OCI-LY7 (cell line): ENCODE measurements at regions of chr16 and their contacts with region 1.

Region 1: DNA sequence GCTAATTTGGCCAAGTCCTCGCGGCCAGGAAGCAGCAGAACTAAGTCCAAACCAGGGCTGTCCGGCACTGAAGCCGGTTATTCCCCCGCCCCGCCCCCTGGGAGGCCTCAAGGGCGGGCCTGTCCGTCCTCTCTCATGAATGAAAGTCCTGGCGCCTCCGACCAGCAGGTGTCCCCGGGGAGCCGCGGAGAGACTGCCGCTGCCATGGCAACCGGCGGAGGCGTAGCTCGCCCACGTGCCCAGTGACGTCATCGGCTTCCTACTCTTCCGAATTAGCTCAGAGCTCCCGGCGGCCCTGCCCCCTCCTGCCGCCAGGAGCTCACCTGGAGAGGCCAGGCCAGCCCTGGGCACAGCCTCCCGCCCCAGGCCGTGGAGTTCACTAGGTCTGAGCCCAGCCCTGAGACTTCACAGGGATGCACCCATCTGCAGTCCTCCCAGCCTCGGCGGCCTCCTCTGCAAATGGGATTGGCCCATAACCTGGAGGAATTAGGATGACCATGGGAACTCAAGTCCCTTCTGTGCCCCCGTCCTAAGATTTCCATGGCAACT is 1.3 kb downstream of the SPATA2L start:
- DNase-seq: peak; percentile 99
- H3K4me3 ChIP-seq: peak overlapping the region; percentile 74
- H3K27ac ChIP-seq: peak overlapping the region; percentile 55
- H3K4me1 ChIP-seq: peaks cover 31% of the 10 kb centered on the region
- CTCF ChIP-seq: peak; percentile 72

Region 2: DNA sequence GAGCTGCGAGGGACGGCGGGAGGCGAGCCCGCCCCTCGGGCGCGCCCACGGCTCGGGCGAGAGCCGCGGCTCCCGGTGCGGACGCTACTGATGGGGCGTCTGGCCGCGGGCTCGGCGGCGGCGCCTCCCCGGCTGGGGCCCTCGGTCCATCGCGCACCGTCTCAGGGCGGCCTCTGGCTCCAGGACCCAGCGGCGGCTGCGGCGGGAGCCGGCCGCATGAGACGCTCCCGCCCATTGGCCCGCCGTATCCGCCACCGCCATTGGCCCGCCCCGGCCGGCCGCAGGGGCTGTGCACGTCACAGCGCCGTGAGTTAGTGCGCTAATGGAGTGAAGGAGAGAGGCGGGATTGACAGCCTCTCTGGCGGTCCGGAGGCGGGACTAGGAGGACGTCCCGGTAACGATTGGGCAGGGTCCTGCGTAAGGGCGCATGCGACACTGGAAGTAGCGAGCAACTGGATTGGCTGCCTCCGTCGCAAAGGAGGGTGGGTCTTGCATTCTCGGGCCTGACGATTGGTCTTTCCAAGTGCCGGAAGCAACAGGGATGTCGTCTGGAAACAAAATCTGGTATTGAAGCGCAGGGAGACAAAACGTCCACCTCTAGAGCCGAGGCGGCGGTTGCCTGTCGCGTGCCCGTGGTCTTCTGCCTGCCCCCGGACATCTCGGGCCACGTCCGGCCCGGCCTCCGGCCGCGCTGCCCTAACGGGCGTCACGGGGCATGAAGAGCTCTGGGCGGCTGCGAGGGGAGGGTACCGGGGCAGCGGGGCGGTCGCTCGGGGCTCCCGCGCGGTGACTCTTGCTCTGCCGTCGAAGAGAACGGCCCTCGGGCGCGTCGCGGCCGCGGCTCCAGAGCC is 209.6 kb before region 1 on chr16 and contains the start of gene ANKRD11:
- CTCF ChIA-PET with region 1: no interaction called
- POLR2A ChIA-PET with region 1: no interaction called
- intact Hi-C with region 1: no loop called
- DNase-seq: peak; percentile 100
- H3K4me3 ChIP-seq: peak within 1 kb of the TSS; percentile 83
- H3K27ac ChIP-seq: peak within 1 kb of the TSS; percentile 92
- H3K4me1 ChIP-seq: peaks cover 42% of the 10 kb centered on the region
- CTCF ChIP-seq: no peak
- total RNA-seq, gene ANKRD11: 87.0 and 89.1 TPM in 2 replicates

Region 3: DNA sequence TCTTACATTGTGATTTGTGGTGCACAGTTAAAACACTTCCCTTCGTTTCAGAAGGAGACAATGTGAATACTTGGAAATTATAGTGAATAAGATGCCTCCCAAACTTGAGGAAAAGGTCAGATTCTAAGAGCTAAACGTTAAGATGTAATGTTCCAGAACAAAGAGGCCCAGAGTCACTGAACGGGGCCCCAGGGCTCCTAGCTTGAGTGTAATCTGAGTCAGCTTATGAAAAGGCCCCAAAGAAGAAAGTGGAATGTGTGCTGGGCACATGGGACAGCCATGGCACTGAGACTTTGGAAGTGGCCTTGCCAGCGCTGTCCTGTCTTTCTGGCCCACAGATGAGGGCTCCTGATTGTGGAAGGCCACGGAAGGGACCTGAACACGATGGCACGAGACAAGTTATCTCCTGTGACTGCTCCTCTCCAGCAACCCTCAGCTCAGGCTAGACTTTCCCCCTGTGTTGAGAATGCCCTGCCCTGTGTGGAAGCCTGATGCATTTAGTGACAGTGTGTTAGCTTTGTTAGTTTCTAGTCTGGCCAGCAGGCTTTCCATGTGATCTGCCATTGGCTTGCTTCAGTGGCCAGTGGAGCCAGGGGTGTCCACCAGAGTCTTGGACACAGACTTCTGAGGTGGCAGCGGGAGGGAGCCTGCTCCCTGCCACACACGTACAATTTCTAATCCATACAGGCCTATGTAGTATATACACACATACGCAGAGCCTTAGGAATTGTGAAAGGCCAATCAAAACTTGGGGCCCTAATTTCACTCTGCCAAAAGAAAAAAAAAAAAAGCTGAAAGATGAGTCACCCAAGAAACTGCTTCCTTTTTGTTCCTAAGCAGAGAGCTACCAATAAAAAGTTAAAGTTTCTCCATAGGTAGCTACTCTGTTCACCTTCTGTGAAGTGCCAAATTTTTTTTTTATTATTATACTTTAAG is 29.4 kb before region 1 on chr16:
- CTCF ChIA-PET with region 1: no interaction called
- POLR2A ChIA-PET with region 1: no interaction called
- intact Hi-C with region 1: no loop called
- DNase-seq: no peak
- H3K4me3 ChIP-seq: no peak overlapping the region
- H3K27ac ChIP-seq: no peak overlapping the region
- H3K4me1 ChIP-seq: no peaks in the 10 kb centered on the region
- CTCF ChIP-seq: no peak

Region 4: GRCh38 chr16:89720813-89721545 is 20.8 kb after region 1 on chr16 and contains the starts of genes VPS9D1 and ZNF276:
- CTCF ChIA-PET with region 1: no interaction called
- POLR2A ChIA-PET with region 1: no interaction called
- intact Hi-C with region 1: loop called (anchors 1 kb)
- DNase-seq: peak; percentile 80
- H3K4me3 ChIP-seq: peak within 1 kb of the TSS; percentile 89
- H3K27ac ChIP-seq: peak within 1 kb of the TSS; percentile 57
- H3K4me1 ChIP-seq: peaks cover 19% of the 10 kb centered on the region
- CTCF ChIP-seq: no peak
- total RNA-seq, gene VPS9D1: 2.0 and 3.1 TPM in 2 replicates
- total RNA-seq, gene ZNF276: 27.4 and 31.0 TPM in 2 replicates

Region 5: GRCh38 chr16:89917773-89918452 is 217.7 kb after region 1 on chr16:
- CTCF ChIA-PET with region 1: interaction called, 3 read pairs
- POLR2A ChIA-PET with region 1: no interaction called
- intact Hi-C with region 1: loop called (anchors 2 kb)
- DNase-seq: peak; percentile 96
- H3K4me3 ChIP-seq: peak overlapping the region; percentile 58
- H3K27ac ChIP-seq: peak overlapping the region; percentile 90
- H3K4me1 ChIP-seq: peaks cover 52% of the 10 kb centered on the region
- CTCF ChIP-seq: no peak

Region 6: DNA sequence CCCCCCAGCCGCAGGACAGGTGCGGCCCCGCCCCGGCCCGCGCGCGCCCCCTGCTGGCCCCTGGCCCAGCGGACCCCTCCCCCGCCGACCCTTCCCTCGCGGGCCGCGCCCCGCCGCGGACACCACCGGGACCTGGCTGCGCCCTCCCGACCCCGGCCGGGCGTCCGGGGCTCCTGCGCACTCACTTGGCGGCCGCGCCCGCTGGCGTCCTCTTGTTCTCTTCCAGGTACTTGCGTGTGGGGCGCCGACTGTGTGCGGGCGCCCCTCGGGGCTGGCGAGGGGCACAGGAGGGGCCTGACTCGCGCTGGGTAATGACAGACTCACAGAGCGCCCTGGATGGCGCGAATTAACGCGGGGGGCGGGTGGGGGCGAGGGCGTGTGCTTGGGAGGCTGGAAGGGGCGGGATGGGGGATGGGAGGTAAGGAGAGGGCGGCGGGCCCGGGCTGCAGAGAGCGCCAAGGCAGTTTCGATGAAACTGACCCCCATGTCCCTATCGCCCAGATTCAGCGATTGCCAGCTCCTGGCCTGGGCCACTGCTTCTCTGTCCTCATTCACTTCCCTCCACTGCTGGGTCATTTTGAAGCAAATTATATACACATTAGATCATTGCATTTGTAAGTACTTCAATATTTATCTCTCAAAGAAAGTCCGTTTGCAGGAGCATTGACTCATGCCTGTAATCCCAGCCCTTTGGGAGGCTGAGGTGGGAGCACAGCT is 319.5 kb after region 1 on chr16:
- CTCF ChIA-PET with region 1: no interaction called
- POLR2A ChIA-PET with region 1: no interaction called
- intact Hi-C with region 1: loop called (anchors 10 kb)
- DNase-seq: peak; percentile 57
- H3K4me3 ChIP-seq: peak overlapping the region; percentile 58
- H3K27ac ChIP-seq: no peak overlapping the region
- H3K4me1 ChIP-seq: peaks cover 32% of the 10 kb centered on the region
- CTCF ChIP-seq: peak; percentile 62